Mammary epithelial cell (primary cell): ENCODE measurements at regions of chr7 and their contacts with region 1.

Region 1: DNA sequence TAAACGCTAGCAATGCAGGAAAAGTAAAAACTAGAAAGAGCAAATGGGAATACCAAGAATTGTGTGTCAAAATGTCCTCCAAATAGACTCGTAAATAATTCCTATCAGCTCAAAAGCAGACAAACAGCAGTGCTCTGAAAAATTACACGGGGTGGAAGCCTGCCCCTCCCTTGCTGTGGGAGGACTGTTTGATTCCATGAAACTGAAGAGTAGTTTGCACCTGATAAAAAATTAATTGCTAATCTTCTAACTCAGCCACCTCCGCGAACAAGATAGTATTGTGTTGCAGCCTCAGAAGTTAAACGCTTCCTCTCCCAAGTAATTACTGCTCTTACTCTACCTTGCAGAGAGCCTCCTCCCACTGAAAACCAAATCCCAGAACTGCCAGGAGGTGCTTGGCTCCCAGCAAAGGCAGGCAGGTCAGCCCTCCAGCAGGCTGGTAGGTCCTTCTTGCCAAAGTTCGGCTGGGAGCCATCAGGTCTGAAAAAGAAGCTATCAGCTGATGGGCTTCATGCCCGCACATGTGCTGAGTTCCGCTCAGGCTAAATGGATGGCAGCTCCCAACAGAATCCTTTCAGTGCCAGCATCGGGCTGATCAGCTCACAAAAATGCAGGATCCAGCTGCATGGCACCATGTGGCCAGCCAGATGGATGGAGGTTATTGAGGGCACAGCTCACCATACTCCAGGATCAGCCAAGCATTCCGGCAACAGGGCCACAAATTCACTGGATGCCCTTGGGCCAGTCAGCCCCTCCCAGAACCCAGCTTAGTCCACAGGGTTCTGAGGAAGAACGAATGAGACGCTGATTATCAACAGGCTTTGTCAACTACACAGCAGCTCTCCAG is 37.1 kb downstream of the MAD1L1 start:
- DNase-seq: no peak
- H3K4me3 ChIP-seq: no peak overlapping the region
- H3K27ac ChIP-seq: no peak overlapping the region
- H3K4me1 ChIP-seq: peaks cover 20% of the 10 kb centered on the region
- H3K27me3 ChIP-seq: no peaks in the 10 kb centered on the region
- CTCF ChIP-seq: no peak

Region 2: DNA sequence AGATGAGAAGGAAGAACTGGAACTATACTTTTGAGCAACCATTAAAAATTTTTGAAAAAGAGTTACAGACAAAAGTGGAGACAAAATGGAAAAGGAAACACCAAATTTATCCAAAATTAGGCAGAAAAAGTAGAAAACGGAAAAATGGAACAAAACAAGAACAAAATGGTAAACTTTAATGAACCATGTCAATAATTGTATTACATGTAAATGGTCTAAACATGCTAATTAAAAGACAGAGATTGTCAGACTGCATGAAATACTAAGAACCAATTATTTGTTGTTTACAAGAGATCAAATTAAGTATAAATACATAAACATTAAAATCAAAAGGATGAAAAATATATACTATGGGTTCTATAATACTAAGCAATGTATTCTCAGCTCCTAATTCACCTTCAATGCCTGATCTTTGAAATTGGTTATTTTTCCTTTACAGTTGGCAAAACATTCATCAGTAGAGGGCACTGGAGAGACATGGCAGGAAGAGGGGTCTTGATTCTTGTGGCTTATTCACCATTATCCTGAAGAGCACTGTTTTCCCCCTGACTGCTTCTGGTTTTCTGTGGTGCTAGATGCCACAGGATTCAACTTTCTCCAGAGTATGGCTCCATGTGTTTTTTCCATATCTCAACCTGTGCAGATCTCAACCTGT is 400.6 kb before region 1 on chr7:
- CTCF ChIA-PET with region 1: no interaction called
- dilution Hi-C with region 1: no loop called
- in situ Hi-C with region 1: no loop called
- intact Hi-C with region 1: no loop called
- DNase-seq: no peak
- H3K4me3 ChIP-seq: no peak overlapping the region
- H3K27ac ChIP-seq: no peak overlapping the region
- H3K4me1 ChIP-seq: no peaks in the 10 kb centered on the region
- H3K27me3 ChIP-seq: no peaks in the 10 kb centered on the region
- CTCF ChIP-seq: no peak

Region 3: DNA sequence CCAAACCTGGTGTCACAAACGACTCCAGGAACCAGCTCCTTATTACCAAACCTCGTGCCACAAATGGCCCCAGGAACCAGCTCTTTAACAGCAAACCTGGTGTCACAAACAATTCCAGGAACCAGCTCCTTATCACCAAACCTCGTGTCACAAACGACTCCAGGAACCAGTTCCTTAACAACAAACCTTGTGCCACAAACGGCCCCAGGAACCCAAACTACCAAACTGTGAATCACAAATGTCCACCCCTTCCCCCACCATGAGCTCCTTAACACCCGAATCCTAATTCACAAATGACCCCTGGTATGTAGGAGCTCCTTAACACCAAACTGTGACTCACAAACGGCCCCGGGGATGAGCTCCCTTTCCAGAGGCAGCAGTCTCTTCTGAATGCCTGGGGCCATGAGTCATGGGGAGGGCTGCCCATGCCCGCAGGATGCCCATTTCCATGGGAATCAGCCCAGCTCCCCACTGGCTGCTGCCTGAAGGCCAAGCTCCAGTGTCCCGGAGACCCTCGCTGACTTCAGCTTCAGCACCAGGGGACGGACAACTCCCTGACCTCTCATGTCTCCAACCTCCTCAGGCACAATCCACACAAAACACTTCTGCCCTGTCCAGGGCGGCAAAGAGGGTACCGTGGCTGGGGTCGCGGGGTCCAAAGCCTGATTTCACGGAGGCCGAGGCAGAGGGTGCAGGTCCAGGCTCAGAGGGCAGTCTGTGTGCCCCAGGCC is 312.4 kb before region 1 on chr7:
- CTCF ChIA-PET with region 1: interaction called, 21 read pairs
- dilution Hi-C with region 1: no loop called
- in situ Hi-C with region 1: no loop called
- intact Hi-C with region 1: no loop called
- DNase-seq: peak; percentile 75
- H3K4me3 ChIP-seq: no peak overlapping the region
- H3K27ac ChIP-seq: no peak overlapping the region
- H3K4me1 ChIP-seq: peaks cover 47% of the 10 kb centered on the region
- H3K27me3 ChIP-seq: no peaks in the 10 kb centered on the region
- CTCF ChIP-seq: no peak

Region 4: GRCh38 chr7:2099048-2099957 is 96.3 kb before region 1 on chr7:
- CTCF ChIA-PET with region 1: no interaction called
- dilution Hi-C with region 1: loop called (anchors 10 kb)
- in situ Hi-C with region 1: no loop called
- intact Hi-C with region 1: no loop called
- DNase-seq: no peak
- H3K4me3 ChIP-seq: no peak overlapping the region
- H3K27ac ChIP-seq: no peak overlapping the region
- H3K4me1 ChIP-seq: peaks cover 4% of the 10 kb centered on the region
- H3K27me3 ChIP-seq: no peaks in the 10 kb centered on the region
- CTCF ChIP-seq: no peak